ENCODE measurements at regions of chr15 and their contacts with region 1.

Region 1: GRCh38 chr15:50876989-50877360 is 31.5 kb upstream of the AP4E1 start:
- DNase-seq: peak; percentile 79
- ATAC-seq: no peak
- H3K4me3 Mint-ChIP-seq: peak overlapping the region; percentile 51
- H3K27ac Mint-ChIP-seq: peak overlapping the region; percentile 62
- H3K4me1 Mint-ChIP-seq: peaks cover 50% of the 10 kb centered on the region
- H3K27me3 Mint-ChIP-seq: peaks cover 12% of the 10 kb centered on the region

Region 2: GRCh38 chr15:50247819-50248655 is 628.9 kb before region 1 on chr15:
- CTCF ChIA-PET with region 1: no interaction called
- POLR2A ChIA-PET with region 1: no interaction called
- intact Hi-C with region 1: loop called in 1 of 2 experiments (anchors 10 kb)
- DNase-seq: peak; percentile 83
- ATAC-seq: peak; percentile 99
- H3K4me3 Mint-ChIP-seq: peak overlapping the region; percentile 67
- H3K27ac Mint-ChIP-seq: peak overlapping the region; percentile 96
- H3K4me1 Mint-ChIP-seq: peaks cover 33% of the 10 kb centered on the region
- H3K27me3 Mint-ChIP-seq: no peaks in the 10 kb centered on the region

Region 3: DNA sequence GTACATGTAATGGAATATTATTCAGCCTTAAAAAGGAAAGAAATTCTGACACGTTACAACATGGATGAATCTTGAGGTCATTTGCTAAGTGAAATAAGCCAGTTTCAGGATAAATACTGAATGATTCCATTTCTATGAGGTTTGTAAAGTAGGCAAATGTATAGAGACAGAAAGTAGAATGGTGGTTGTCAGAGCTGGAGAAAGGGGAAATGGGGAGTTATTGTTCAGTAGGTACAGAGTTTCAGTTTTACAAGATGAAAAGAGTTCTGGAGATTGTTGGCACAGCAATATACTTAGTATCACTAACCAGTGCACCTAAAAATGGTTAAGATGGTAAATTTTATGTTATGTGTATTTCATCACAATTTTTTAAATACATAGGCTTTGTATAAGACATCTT is 392.2 kb before region 1 on chr15:
- CTCF ChIA-PET with region 1: no interaction called
- POLR2A ChIA-PET with region 1: no interaction called
- intact Hi-C with region 1: loop called in 1 of 2 experiments (anchors 10 kb)
- DNase-seq: no peak
- ATAC-seq: peak; percentile 52
- H3K4me3 Mint-ChIP-seq: no peak overlapping the region
- H3K27ac Mint-ChIP-seq: no peak overlapping the region
- H3K4me1 Mint-ChIP-seq: peaks cover 25% of the 10 kb centered on the region
- H3K27me3 Mint-ChIP-seq: no peaks in the 10 kb centered on the region

Region 4: DNA sequence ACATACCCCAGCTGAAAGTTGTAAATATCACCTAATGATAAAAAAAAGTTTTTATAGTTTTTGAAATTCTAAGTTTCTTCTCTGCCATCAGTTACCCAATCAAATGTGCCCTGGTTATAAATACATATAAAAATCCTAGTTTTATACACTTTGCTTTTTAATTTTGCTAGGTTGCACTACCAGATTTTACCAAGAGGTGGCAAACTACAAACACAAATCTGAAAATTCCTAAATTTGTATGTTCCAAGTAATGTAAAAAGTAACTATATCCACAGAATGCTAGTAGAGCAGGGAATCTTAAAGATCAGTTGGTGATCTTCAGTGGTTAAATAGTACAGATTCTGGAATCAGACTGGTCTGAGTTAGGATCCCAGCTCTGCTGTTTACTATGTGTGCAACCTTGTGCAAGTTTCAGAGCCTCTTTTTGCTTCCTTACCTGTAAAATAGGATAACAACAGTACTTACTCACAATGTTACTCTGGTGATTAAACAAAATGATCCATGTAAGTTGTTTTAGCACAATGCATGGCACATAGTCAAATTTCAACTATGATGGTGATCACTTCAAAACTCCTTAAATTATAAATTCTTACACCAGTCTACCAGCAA is 201.3 kb before region 1 on chr15:
- CTCF ChIA-PET with region 1: interaction called, 11 read pairs
- POLR2A ChIA-PET with region 1: interaction called, 3 read pairs
- intact Hi-C with region 1: loop called (anchors 1 to 5 kb)
- DNase-seq: no peak
- ATAC-seq: peak; percentile 26
- H3K4me3 Mint-ChIP-seq: no peak overlapping the region
- H3K27ac Mint-ChIP-seq: peak overlapping the region; percentile 29
- H3K4me1 Mint-ChIP-seq: peaks cover 12% of the 10 kb centered on the region
- H3K27me3 Mint-ChIP-seq: no peaks in the 10 kb centered on the region

Region 5: DNA sequence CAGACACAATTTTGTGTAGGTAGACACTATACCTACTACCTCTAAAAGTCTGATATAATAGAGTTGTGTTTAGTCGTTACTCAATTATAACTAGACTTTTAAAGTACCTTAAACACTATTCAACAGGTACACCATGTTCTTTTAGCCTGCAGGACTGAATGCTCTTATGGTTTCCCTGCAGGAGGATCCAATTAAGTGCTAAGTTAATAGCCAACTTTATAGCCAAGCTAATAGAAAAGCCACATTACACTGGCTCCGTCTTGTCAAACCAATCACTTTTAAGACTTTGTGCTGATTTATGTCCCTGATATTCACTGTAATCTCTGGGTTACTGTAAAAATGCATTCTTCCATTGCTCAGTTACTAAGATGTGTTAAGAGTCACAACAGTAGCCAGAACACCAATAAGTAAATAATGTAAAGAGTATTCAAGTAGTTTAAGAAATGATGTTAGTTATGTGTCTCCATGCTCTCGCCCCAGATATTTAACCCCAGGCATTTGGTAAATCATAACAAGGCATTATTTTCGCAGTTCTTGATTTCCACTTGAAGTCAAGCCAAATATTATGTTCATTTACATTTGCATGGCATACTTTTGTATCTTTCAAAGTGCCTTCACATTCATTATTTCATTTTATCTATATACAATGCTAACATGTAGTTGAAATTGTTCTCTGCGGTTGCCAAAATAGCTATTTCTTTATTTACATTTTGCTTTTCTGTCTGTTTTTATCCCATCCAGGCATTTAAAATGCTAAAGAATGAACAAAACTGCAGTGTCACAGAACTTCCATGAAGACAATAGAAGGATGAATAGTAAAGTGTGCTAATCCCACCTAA is 11.2 kb before region 1 on chr15:
- CTCF ChIA-PET with region 1: interaction called, 11 read pairs
- POLR2A ChIA-PET with region 1: no interaction called
- intact Hi-C with region 1: no loop called
- DNase-seq: no peak
- ATAC-seq: no peak
- H3K4me3 Mint-ChIP-seq: no peak overlapping the region
- H3K27ac Mint-ChIP-seq: no peak overlapping the region
- H3K4me1 Mint-ChIP-seq: no peaks in the 10 kb centered on the region
- H3K27me3 Mint-ChIP-seq: peaks cover 2% of the 10 kb centered on the region

Measured in activated CD4-positive, alpha-beta T cell treated with anti-CD3 and anti-CD28 coated beads for 36 hours (primary cell).